ENCODE measurements at regions of chr2 and their contacts with region 1.

Region 1: GRCh38 chr2:165015052-165015642 is 59.8 kb upstream of the SLC38A11 start:
- DNase-seq: peak; percentile 21 to 67
- ATAC-seq: peak; percentile 79 to 93
- H3K4me3 ChIP-seq: no peak overlapping the region
- H3K27ac ChIP-seq: no peak overlapping the region
- H3K4me1 ChIP-seq: no peaks in the 10 kb centered on the region
- CTCF ChIP-seq: peak; percentile 89
- EP300 ChIP-seq: no peak
- POLR2A ChIP-seq: no peak
- RAD21 ChIP-seq: peak; percentile 54 to 70

Region 2: GRCh38 chr2:164706522-164706921 is 308.6 kb before region 1 on chr2:
- CTCF ChIA-PET with region 1: no interaction called
- POLR2A ChIA-PET with region 1: no interaction called
- DNase-seq: peak in 1 of 2 experiments; percentile 34
- ATAC-seq: peak in 1 of 2 experiments; percentile 3; a peak in 1 of 6 replicates
- H3K4me3 ChIP-seq: no peak overlapping the region
- H3K27ac ChIP-seq: peak overlapping the region; percentile 49 to 78
- H3K4me1 ChIP-seq: peaks cover 73% of the 10 kb centered on the region
- CTCF ChIP-seq: no peak
- EP300 ChIP-seq: no peak
- POLR2A ChIP-seq: no peak
- RAD21 ChIP-seq: no peak

Region 3: DNA sequence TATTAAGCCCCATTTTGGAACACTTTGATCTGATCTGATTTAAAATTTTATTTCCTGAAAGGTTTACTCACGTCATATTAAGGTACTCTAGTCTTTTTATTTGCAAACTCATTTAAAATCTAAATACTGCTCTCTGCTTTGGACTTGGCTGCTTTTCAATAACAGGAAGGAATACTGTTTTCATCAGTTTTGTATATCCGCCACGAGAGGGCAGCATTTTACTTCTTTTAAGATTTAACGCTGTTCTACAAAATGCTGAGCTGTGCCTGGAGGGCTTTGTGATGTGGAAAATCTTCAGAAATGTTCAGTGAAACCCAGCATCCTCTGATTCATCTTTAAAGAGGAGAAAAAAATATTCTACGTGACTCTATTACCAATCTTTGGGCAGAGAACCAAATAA is 22.3 kb before region 1 on chr2:
- CTCF ChIA-PET with region 1: interaction called, 23 read pairs
- POLR2A ChIA-PET with region 1: no interaction called
- DNase-seq: peak in 1 of 2 experiments; percentile 80
- ATAC-seq: peak; percentile 73 to 86
- H3K4me3 ChIP-seq: no peak overlapping the region
- H3K27ac ChIP-seq: no peak overlapping the region
- H3K4me1 ChIP-seq: peaks cover 21% of the 10 kb centered on the region
- CTCF ChIP-seq: peak; percentile 67
- EP300 ChIP-seq: no peak
- POLR2A ChIP-seq: no peak
- RAD21 ChIP-seq: peak; percentile 69 to 78

Region 4: GRCh38 chr2:165032559-165032958 is 17.4 kb after region 1 on chr2:
- CTCF ChIA-PET with region 1: interaction called, 17 read pairs
- POLR2A ChIA-PET with region 1: no interaction called
- DNase-seq: no peak
- ATAC-seq: no peak
- H3K4me3 ChIP-seq: no peak overlapping the region
- H3K27ac ChIP-seq: no peak overlapping the region
- H3K4me1 ChIP-seq: no peaks in the 10 kb centered on the region
- CTCF ChIP-seq: no peak
- EP300 ChIP-seq: no peak
- POLR2A ChIP-seq: no peak
- RAD21 ChIP-seq: no peak

Region 5: DNA sequence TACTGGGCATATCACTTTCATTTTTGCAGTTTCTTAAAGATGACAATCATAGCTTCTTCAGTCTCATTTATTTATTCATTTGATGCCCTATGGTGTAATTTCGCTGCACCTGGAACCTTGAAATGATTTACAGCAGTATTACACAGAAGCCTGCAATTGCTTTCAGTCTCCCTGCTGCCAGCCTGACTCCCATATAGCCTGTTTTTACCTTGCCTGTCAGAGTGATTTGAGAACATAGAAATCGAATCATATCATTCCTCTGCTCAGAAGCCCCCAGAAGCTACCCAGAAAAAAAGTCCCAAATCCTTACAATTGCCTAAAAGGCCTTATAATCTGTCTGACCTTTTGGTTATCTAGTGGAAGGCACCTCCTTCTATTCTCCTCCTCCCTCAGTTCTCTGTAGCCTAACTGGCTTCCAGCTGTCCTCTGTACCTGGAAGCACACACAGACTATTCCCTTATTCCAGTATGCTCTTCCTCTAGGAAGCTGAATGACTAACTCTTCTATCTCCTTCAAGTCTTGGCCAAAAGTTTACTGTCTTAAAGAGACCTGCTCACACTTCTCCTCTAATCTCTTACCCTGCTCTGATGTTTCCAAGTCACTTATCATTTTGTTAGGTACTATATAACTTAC is 176.1 kb after region 1 on chr2:
- CTCF ChIA-PET with region 1: no interaction called
- POLR2A ChIA-PET with region 1: no interaction called
- DNase-seq: no peak
- ATAC-seq: no peak
- H3K4me3 ChIP-seq: no peak overlapping the region
- H3K27ac ChIP-seq: no peak overlapping the region
- H3K4me1 ChIP-seq: 0 out of 3 replicates have a peak, but pooled peaks cover under 1% of the 10 kb centered on the region
- CTCF ChIP-seq: no peak
- EP300 ChIP-seq: no peak
- POLR2A ChIP-seq: no peak
- RAD21 ChIP-seq: no peak

Region 6: GRCh38 chr2:165203689-165204559 is 188.8 kb after region 1 on chr2 and contains the start of gene SCN3A:
- CTCF ChIA-PET with region 1: interaction called, 47 read pairs
- POLR2A ChIA-PET with region 1: interaction called, 5 read pairs
- DNase-seq: peak; percentile 4 to 51
- ATAC-seq: peak; percentile 73 to 82; a peak in 4 of 6 replicates
- H3K4me3 ChIP-seq: no peak within 1 kb of the TSS
- H3K27ac ChIP-seq: no peak within 1 kb of the TSS
- H3K4me1 ChIP-seq: no peaks in the 10 kb centered on the region
- CTCF ChIP-seq: peak; percentile 87
- EP300 ChIP-seq: no peak
- POLR2A ChIP-seq: no peak
- RAD21 ChIP-seq: peak; percentile 67 to 70
- polyA plus RNA-seq, gene SCN3A: 0.07 and 0.12 TPM in 2 replicates

Measured in A549 (cell line).